PC-3 (cell line): ENCODE measurements at regions of chr6 and their contacts with region 1.

Region 1: GRCh38 chr6:24855395-24856245 is 56.9 kb upstream of the ARMH2 start:
- DNase-seq: peak; percentile 83
- ATAC-seq: peak; percentile 37
- H3K4me3 ChIP-seq: no peak overlapping the region
- H3K27ac ChIP-seq: no peak overlapping the region
- H3K4me1 ChIP-seq: peaks cover 17% of the 10 kb centered on the region
- H3K27me3 ChIP-seq: no peaks in the 10 kb centered on the region; the same call in 1 of the 2 replicates
- CTCF ChIP-seq: peak; percentile 92

Region 2: DNA sequence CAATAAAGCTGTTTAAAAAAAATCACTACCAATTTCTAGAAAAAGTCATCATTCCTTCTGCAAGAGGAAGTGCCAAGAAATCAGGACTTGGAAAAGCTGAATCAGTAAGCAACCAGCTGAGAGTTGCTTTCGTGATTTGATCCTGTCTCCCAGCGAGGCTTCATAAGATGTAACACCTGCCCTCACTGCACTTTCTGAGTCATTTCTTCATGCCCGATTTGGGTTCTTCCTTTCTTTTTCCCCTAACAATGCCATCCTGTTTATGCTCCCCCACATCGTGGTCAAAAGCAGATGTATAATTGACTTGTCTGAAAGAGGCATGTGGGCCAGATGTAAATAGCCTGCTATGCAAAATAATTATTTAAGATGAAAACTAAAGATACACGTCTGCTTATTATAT is 28.0 kb after region 1 on chr6:
- CTCF ChIA-PET with region 1: no interaction called
- POLR2A ChIA-PET with region 1: no interaction called
- intact Hi-C with region 1: loop called (anchors 2 kb)
- DNase-seq: peak; percentile 73
- ATAC-seq: peak; percentile 34
- H3K4me3 ChIP-seq: no peak overlapping the region
- H3K27ac ChIP-seq: peak overlapping the region; percentile 53
- H3K4me1 ChIP-seq: peaks cover 39% of the 10 kb centered on the region
- H3K27me3 ChIP-seq: no peaks in the 10 kb centered on the region
- CTCF ChIP-seq: no peak

Region 3: DNA sequence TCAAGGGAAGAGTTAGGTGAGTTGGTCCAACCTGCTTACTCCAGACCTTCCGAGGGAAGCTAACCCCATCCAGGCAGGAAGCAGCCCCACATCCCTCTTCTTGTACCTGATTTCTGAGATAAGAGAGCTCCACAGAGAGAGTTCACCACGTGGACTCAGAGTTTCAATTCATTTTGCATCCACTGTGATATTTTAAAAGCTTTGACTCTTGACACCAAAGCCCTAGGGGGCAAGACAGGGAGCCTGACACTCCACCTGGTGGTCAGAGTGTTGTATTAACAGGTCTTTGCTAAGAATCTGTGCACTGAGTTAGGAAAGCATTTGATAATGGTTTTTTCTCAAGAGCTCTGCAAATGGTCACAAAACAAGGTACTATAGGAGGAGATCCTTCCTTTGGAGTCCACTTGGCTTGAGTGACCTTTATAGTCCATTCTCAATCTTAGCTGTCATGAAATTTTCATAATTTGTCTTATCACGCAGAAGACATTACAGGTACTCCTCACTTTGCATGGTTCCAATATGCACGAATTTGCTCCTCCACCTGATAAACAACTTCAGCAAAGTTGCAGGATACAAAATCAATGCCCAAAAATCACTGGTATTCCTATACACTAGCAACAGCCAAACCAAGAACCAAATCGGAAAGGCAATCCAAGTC is 136.3 kb after region 1 on chr6:
- CTCF ChIA-PET with region 1: interaction called, 23 read pairs
- POLR2A ChIA-PET with region 1: no interaction called
- intact Hi-C with region 1: loop called (anchors 1 kb)
- DNase-seq: peak; percentile 72
- ATAC-seq: peak; percentile 68
- H3K4me3 ChIP-seq: no peak overlapping the region
- H3K27ac ChIP-seq: no peak overlapping the region
- H3K4me1 ChIP-seq: peaks cover 10% of the 10 kb centered on the region
- H3K27me3 ChIP-seq: no peaks in the 10 kb centered on the region
- CTCF ChIP-seq: peak; percentile 92

Region 4: GRCh38 chr6:25070547-25071366 is 215.1 kb after region 1 on chr6:
- CTCF ChIA-PET with region 1: interaction called, 5 read pairs
- POLR2A ChIA-PET with region 1: no interaction called
- intact Hi-C with region 1: loop called (anchors 1 kb)
- DNase-seq: peak; percentile 85
- ATAC-seq: peak; percentile 88
- H3K4me3 ChIP-seq: peak overlapping the region; percentile 34; the same call in 1 of the 2 replicates
- H3K27ac ChIP-seq: no peak overlapping the region
- H3K4me1 ChIP-seq: peaks cover 9% of the 10 kb centered on the region; the same call in 1 of the 2 replicates
- H3K27me3 ChIP-seq: no peaks in the 10 kb centered on the region
- CTCF ChIP-seq: peak; percentile 93

Region 5: DNA sequence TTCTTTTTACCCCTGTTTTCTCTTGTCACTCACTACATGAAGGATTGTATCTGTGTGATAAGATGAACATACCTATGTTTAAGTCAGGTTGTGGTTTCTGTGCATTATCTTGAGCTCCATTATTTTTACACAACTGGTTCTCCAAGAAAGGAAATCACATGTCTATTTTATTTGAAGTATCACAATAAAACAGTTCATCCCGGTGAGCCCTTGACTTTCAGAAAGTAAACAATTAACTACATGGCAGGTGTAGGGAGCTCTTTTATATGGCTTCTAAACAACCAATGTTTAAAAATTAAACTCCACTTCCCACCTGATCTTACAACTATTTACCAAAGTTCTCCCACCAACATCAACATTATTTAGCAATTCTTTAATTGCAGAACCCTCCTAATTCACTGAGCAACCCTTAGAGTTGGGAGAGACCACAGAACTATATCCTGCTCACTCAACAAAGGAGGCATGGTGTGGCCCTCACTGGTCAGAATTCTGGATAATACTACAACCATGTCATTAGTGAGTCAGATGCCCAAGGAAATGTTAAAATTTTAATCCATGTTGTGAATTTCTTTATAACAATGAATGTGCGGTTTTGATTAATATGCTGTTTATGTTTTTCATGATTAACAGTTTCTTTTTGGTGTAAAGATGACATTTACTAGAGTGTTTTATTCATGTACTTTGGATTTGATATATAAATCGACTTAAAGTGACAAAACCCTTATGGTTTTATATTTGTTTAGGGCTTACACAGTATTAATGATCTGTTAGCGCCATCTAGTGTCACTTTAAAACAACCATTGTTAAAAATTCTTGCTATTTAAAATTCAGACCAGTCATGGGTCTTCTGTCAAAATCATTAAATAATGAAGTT is 746.4 kb after region 1 on chr6:
- CTCF ChIA-PET with region 1: no interaction called
- POLR2A ChIA-PET with region 1: no interaction called
- intact Hi-C with region 1: loop called (anchors 2 kb)
- DNase-seq: peak; percentile 70
- ATAC-seq: peak; percentile 81
- H3K4me3 ChIP-seq: no peak overlapping the region
- H3K27ac ChIP-seq: no peak overlapping the region
- H3K4me1 ChIP-seq: peaks cover 7% of the 10 kb centered on the region; the same call in 1 of the 2 replicates
- H3K27me3 ChIP-seq: no peaks in the 10 kb centered on the region
- CTCF ChIP-seq: peak; percentile 87